ENCODE measurements at regions of chr12 and their contacts with region 1.

Region 1: DNA sequence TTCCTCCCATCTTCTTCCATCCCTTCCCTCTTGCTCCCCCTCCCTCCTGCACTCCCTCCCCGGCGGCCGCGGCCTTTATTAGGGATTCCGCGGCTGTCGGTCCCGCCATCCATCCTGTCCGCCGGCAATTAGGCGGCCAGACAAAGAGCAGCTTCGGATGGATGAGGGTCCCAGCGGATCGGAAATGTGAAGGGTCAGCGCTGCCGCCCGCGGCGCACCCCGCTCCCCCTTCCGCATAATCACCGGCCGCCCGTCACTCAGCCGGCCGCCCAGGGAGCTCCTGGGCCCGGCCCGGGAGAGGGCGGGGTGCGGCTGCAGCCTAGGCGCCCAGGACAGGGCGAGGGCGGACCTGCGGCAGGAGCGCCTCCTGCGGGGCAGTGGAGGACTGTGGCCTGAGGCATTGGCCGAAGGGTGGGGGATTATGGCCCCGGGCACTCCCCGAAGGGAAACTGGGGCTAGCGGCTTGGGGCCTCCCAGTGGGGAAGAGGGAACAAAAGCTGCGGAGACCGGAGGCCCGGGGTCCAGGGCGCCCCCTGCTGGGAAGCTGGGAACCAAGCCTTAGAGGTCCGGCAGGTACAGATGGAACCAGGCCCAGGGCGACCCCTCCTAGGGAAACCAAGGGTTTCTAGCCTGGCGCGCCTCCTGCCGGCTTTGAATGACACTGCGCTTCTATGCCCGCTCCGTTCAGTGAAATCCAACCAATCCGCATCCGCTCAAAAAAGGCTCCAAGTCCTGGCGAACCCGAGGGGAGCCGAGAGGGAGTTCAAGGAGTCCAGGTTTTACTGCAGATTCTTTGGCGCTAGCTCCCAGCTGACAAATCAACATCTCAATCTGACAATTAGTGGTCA is 4.4 kb upstream of the DNAJC22 start:
- DNase-seq: peak; percentile 91
- H3K4me3 ChIP-seq: peak overlapping the region; percentile 53 to 62 (median 54)
- H3K27ac ChIP-seq: no peak overlapping the region
- H3K4me1 ChIP-seq: peaks cover 46 to 59% (median 55%) of the 10 kb centered on the region in 4 donors
- H3K27me3 ChIP-seq: peaks cover 14 to 89% (median 41%) of the 10 kb centered on the region in 4 donors
- CTCF ChIP-seq: peak; percentile 75 to 84 (median 79)
- EP300 ChIP-seq: no peak
- POLR2A ChIP-seq: no peak

Region 2: DNA sequence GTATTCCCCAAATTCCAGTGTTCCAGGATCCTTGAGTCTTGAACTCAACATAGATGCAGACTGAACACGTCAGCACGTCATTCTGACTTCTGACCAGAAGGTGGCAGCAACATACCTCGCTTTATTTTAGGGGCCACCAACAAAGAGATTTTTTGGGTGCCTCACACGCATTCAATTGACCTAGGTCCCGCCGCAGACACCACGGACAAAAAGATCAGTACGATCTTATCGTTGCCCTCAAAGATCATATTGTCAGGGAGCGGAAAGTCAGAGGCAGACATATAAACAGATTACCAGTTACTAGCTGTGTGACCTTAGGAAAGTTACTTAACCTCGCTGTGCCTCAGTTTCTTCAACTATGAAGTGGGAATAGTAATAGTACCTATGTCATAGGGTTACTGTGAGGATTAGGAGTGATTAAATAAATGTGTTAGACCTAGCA is 53.9 kb before region 1 on chr12:
- intact Hi-C with region 1: loop called (anchors 5 kb)
- DNase-seq: no peak
- H3K4me3 ChIP-seq: no peak overlapping the region
- H3K27ac ChIP-seq: no peak overlapping the region
- H3K4me1 ChIP-seq: peaks cover 8 to 11% (median 10%) of the 10 kb centered on the region in 4 donors
- H3K27me3 ChIP-seq: peaks cover 0 to 59% (median 0%) of the 10 kb centered on the region in 4 donors
- CTCF ChIP-seq: peak; percentile 83 to 88 (median 85)
- EP300 ChIP-seq: no peak
- POLR2A ChIP-seq: no peak

Region 3: GRCh38 chr12:49456131-49456679 is 113.9 kb after region 1 on chr12:
- intact Hi-C with region 1: no loop called
- DNase-seq: no peak
- H3K4me3 ChIP-seq: no peak overlapping the region
- H3K27ac ChIP-seq: no peak overlapping the region
- H3K4me1 ChIP-seq: peaks cover 0 to 2% (median 0%) of the 10 kb centered on the region in 4 donors
- H3K27me3 ChIP-seq: no peaks in the 10 kb centered on the region
- CTCF ChIP-seq: no peak
- EP300 ChIP-seq: no peak
- POLR2A ChIP-seq: no peak

Measured in esophagus muscularis mucosa (tissue), 4 donors.